ENCODE measurements at regions of chr12 and their contacts with region 1.

Region 1: DNA sequence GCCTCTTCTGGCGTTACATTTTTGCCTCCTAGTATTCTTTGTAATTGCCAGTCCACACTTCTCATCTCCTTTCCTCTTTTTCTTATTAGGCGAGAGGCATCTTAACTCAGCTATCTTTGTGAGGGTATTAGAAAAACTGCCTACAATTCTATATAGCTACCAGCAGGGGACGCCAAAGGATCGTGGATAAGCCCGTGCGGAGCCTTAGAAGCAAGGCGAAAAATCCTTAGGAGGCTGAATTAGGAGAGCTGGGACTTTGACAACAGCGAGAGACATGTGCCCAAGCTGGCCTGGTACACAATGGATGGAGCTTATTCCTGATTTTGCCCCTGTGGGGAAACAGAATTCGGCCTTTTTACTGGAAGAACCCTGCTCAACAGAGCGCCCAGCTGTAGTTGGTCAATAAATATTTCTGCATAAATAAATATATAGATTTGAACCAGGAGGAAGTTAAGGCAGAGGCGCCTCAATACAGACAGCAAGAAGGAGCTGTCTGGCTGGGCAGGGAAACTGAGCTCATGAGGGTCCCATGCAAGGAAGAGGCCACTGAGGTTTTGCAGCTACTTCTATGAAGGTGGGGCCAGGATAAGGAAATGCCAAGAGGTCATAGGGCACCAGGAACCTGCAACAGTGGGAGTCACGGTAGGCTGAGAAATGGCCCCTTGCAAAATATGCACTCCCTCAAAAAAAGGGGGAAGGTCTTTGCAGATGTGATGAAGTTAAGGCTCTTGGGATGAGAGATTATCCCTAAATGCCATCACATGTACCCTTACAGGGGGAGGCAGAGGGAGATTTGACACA is 14.6 kb upstream of the RBM19 start:
- DNase-seq: no peak
- H3K4me3 Mint-ChIP-seq: no peak overlapping the region
- H3K27ac Mint-ChIP-seq: no peak overlapping the region
- H3K4me1 Mint-ChIP-seq: no peaks in the 10 kb centered on the region
- H3K27me3 Mint-ChIP-seq: peaks cover 4% of the 10 kb centered on the region

Region 2: DNA sequence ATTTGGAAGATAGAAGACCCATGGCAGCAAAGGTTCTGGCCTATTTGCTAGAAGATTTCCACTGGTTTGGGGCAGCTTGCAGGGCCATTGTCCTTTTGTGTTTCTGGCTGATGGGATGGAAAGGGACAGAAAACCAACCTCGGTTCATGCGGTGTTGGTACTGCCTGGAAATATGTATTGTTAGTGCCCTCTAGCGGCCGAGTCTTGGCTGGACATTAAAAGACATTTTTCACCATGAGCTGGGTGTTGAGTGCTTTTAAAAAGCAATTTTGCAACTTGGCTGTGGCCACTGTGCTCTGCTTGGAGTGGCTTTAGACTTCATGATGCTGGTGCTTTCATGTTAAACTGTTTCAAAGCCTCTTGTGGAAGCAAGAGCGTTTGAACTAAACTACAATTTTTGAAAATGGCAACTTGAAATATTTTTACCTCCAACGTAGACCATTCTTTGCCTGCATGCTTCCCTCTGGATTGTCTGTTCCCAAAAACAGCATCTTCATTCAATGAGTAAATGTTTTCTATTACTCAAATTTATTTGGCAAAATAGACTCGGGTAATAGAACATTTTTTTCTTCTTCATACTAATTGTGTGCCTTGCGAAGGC is 527.9 kb after region 1 on chr12:
- intact Hi-C with region 1: loop called (anchors 1 kb)
- DNase-seq: peak; percentile 33
- H3K4me3 Mint-ChIP-seq: no peak overlapping the region
- H3K27ac Mint-ChIP-seq: no peak overlapping the region
- H3K4me1 Mint-ChIP-seq: no peaks in the 10 kb centered on the region
- H3K27me3 Mint-ChIP-seq: peaks cover 4% of the 10 kb centered on the region